AG04450 (cell line): ENCODE measurements at regions of chr7 and their contacts with region 1.

Region 1: DNA sequence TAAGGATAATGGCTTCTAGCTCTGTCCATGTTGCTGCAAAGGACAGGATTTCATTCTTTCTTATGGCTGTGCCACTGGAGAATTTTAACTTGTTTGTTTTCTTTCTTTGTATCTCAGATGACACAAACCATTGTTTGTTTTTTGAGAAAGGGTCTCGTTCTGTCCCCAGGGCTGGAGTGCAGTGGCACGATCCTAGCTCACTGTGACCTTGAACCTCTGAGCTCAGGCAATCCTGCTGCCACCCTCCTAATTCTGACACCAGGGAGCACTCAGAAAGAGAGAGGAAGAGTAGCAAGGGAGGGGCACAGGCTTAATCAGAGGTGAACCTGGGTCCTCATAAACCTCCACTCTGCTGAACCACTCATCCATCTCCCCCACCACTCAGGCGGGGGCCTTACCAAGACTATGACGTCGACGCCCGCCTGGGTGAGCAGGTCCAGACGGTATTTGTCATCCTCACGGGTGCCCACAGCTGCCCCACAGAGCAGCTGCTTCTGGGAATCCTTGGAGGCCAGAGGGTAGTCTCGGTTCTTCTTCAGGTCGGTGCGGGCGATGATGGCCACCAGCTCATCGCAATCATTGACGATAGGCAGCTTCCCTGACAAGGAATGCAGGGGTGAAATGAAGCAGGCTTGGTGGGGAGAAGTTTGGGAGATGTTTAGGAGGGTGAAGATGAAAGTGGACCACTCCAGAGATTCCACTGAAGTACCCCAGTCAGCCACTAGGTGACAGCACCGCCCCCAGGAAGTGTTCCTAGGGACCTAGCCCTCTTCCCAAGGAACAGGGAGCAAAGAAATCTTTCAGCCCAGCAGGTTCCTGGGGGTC is 11.6 kb downstream of the IMPDH1 start:
- DNase-seq: no peak
- H3K4me3 ChIP-seq: no peak overlapping the region
- H3K27ac ChIP-seq: no peak overlapping the region
- H3K27me3 ChIP-seq: no peaks in the 10 kb centered on the region
- CTCF ChIP-seq: peak; percentile 96

Region 2: DNA sequence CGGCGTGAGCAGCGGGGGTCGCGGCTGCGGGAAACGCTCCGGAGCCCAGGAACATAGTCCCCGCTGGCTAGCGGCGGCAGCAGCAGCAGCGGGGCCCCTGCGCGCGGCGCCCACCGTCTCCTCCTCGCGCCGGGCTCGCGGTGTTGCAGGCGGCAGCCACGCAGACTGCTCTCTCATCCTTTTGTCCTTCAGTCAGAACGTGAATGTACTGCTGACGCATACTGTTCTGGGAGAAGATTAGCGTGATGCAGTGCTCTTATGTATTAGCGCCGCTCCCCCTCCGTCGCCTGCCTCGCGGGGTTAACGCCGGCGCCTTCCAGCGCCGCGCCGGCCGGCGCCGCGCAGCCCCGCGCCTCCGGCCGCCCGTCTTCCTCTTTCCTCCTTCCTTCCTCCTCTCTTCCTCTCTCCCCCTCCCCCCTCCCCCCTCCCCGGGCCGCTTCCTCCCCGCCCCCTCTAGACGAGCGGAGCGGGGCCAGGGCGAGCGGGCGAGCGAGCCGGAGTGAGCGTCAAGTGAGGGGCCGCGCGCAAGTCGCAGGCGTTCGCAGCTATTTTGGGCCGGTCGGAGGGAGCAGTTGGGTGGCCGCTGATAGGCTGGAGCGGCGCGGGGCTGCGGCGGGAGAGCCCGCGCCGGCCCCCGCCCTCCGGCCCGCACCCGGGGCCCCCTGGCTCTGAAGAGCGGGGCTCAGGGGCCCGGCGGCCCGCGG is 366.2 kb before region 1 on chr7:
- CTCF ChIA-PET with region 1: no interaction called
- POLR2A ChIA-PET with region 1: no interaction called
- DNase-seq: peak; percentile 77
- H3K4me3 ChIP-seq: peak overlapping the region; percentile 54
- H3K27ac ChIP-seq: no peak overlapping the region
- H3K27me3 ChIP-seq: no peaks in the 10 kb centered on the region
- CTCF ChIP-seq: peak; percentile 40

Region 3: DNA sequence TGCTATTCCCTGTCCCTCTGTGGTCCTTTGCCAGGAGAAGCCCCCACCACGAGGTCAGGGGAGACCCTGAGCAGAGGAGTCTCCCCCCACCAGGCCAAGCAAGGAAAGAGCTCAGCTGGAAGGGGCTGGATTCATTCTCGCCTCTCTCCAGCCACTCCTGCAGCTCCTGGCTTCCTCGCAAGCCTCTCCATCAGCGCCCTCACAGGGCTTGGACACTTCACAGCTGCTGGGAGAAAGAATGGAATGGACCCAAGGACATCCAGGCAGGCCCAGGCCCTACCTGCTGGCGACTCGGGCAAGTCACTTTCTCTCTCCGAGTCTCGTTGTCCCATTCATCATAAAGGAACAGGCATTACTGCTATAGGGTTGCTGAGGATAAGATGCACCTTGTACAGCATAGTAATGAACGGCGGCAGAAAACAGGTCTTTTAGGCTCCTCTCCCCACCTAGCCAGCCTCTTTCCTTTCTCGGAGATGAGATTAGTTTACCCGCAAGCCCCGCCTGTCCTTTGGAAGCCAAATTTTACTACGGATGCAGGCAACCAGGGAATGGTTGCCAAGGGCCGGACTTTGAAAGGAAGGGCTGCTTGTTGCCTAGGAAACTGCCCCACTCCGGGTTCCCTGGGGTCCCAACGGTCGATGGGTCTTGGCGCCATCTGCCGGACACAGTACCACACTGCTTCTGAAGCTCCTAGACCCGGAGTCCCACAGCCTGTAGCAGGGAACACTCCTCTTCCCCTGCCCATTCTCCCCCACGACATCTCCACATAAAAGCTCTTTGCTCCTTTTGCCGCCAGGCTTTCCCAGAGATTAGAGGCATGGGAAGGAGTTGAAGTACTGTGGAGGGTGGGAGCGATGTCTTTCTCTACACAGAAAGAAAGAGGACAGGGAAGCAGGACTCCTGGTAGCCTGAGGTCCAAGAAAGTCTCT is 10.7 kb before region 1 on chr7:
- CTCF ChIA-PET with region 1: interaction called, 34 read pairs
- POLR2A ChIA-PET with region 1: no interaction called
- DNase-seq: peak; percentile 24
- H3K4me3 ChIP-seq: no peak overlapping the region
- H3K27ac ChIP-seq: no peak overlapping the region
- H3K27me3 ChIP-seq: peaks cover 20% of the 10 kb centered on the region
- CTCF ChIP-seq: peak; percentile 88

Region 4: GRCh38 chr7:128409596-128410160 is 11.4 kb after region 1 on chr7 and contains the start of gene IMPDH1:
- CTCF ChIA-PET with region 1: interaction called, 28 read pairs
- POLR2A ChIA-PET with region 1: no interaction called
- DNase-seq: peak; percentile 13
- H3K4me3 ChIP-seq: peak within 1 kb of the TSS; percentile 82
- H3K27ac ChIP-seq: peak within 1 kb of the TSS; percentile 80
- H3K27me3 ChIP-seq: peaks cover 8% of the 10 kb centered on the region
- CTCF ChIP-seq: no peak
- polyA plus RNA-seq, gene IMPDH1: 43.8 and 56.6 TPM in 2 replicates

Region 5: GRCh38 chr7:128415217-128415785 is 17.1 kb after region 1 on chr7:
- CTCF ChIA-PET with region 1: interaction called, 11 read pairs
- POLR2A ChIA-PET with region 1: no interaction called
- DNase-seq: no peak
- H3K4me3 ChIP-seq: no peak overlapping the region
- H3K27ac ChIP-seq: no peak overlapping the region
- H3K27me3 ChIP-seq: peaks cover 23% of the 10 kb centered on the region
- CTCF ChIP-seq: no peak

Region 6: GRCh38 chr7:128455551-128456254 is 57.5 kb after region 1 on chr7 and contains the start of gene HILPDA:
- CTCF ChIA-PET with region 1: interaction called, 32 read pairs
- POLR2A ChIA-PET with region 1: no interaction called
- DNase-seq: peak; percentile 80
- H3K4me3 ChIP-seq: peak within 1 kb of the TSS; percentile 100
- H3K27ac ChIP-seq: peak within 1 kb of the TSS; percentile 97
- H3K27me3 ChIP-seq: peaks cover 4% of the 10 kb centered on the region
- CTCF ChIP-seq: peak; percentile 27; the same call in 1 of the 2 replicates
- polyA plus RNA-seq, gene HILPDA: 15.9 and 17.8 TPM in 2 replicates